ENCODE measurements at regions of chr3 and their contacts with region 1.

Region 1: GRCh38 chr3:7800006-7800780 is 701.4 kb upstream of the LMCD1 start:
- DNase-seq: no peak
- H3K4me3 Mint-ChIP-seq: no peak overlapping the region
- H3K27ac Mint-ChIP-seq: no peak overlapping the region
- H3K4me1 Mint-ChIP-seq: peaks cover 2% of the 10 kb centered on the region
- H3K27me3 Mint-ChIP-seq: no peaks in the 10 kb centered on the region

Region 2: DNA sequence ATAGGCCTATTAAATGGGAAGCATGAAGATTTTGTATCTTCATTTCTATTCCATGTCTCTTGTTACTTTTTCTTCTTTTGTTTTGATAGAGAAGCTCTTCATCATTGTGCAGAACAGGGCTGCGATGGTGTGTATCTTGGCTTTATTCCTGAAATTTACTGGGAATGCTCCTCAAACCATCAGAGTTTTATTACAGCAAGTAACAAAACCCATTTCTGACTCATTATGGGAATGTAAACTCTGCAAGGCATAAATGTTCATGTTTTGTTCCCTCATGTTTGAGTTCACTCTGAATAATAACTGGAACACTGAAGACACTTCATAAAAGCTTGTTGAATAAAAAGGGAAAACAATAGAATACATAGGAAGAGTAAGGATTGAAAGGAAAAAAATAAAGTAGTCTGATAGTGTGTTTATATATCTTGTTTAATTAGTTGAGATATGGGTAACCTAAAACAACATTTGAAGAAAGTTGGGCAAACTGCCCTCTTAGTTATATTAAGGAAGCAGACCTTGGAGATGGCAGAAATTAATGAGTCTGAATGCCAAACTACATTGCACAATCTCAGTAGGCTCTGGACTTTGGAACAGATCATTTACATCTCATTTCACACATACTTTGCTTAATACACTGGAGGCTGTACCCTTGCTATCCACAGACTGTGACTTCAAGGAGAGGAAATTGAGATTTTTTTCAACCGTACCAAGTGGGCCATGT is 417.7 kb before region 1 on chr3:
- CTCF ChIA-PET with region 1: no interaction called
- intact Hi-C with region 1: no loop called
- DNase-seq: no peak
- H3K4me3 Mint-ChIP-seq: no peak overlapping the region
- H3K27ac Mint-ChIP-seq: no peak overlapping the region
- H3K4me1 Mint-ChIP-seq: no peaks in the 10 kb centered on the region
- H3K27me3 Mint-ChIP-seq: no peaks in the 10 kb centered on the region

Region 3: GRCh38 chr3:8095724-8096123 is 295.5 kb after region 1 on chr3:
- CTCF ChIA-PET with region 1: no interaction called
- intact Hi-C with region 1: loop called (anchors 5 kb)
- DNase-seq: no peak
- H3K4me3 Mint-ChIP-seq: no peak overlapping the region
- H3K27ac Mint-ChIP-seq: no peak overlapping the region
- H3K4me1 Mint-ChIP-seq: no peaks in the 10 kb centered on the region
- H3K27me3 Mint-ChIP-seq: no peaks in the 10 kb centered on the region

Region 4: GRCh38 chr3:8239718-8240695 is 439.8 kb after region 1 on chr3:
- CTCF ChIA-PET with region 1: no interaction called
- intact Hi-C with region 1: loop called (anchors 10 kb)
- DNase-seq: peak; percentile 41
- H3K4me3 Mint-ChIP-seq: no peak overlapping the region
- H3K27ac Mint-ChIP-seq: no peak overlapping the region
- H3K4me1 Mint-ChIP-seq: no peaks in the 10 kb centered on the region
- H3K27me3 Mint-ChIP-seq: no peaks in the 10 kb centered on the region